Endothelial cell of umbilical vein (primary cell): ENCODE measurements at regions of chr20 and their contacts with region 1.

Region 1: GRCh38 chr20:41260734-41261220 is 56.8 kb downstream of the ZHX3 start:
- DNase-seq: peak; percentile 34
- H3K4me3 ChIP-seq: no peak overlapping the region
- H3K27ac ChIP-seq: no peak overlapping the region
- H3K4me1 ChIP-seq: no peaks in the 10 kb centered on the region
- H3K27me3 ChIP-seq: no peaks in the 10 kb centered on the region
- CTCF ChIP-seq: no peak
- POLR2A ChIP-seq: no peak

Region 2: DNA sequence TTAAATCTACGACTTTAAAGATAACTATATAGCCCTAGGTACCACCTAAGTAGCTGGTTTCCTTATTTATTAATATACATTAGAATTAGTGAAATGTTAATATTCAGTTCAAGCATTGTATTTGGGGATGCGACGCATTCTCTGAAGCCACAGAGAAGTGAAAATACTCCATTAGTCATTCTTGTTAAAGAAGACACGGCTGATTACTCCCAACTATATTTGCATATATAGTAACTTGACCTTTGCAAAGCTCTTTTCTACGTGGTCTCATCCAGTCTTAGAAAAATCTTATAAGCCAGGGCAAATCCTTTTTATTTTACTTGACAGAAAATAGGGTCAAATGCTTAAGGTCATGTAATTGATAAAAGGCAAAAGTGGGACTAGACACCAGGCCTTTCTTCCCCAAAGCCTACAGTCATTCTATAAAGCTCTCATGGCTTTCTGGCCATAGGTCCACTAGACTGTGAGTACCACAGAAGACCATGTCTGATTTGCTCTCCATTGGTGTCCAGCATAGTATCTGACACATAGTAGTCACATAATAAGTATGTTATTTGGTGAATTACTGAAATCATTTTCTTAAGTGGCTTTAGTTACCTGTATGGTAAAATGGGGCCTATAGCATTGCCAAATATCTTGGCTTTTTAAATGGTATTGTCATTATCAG is 45.4 kb after region 1 on chr20:
- CTCF ChIA-PET with region 1: no interaction called
- POLR2A ChIA-PET with region 1: interaction called, 11 read pairs
- dilution Hi-C with region 1: no loop called
- intact Hi-C with region 1: no loop called
- DNase-seq: no peak
- H3K4me3 ChIP-seq: no peak overlapping the region
- H3K27ac ChIP-seq: no peak overlapping the region
- H3K4me1 ChIP-seq: peaks cover 10% of the 10 kb centered on the region
- H3K27me3 ChIP-seq: no peaks in the 10 kb centered on the region
- CTCF ChIP-seq: no peak
- POLR2A ChIP-seq: no peak

Region 3: GRCh38 chr20:41365777-41366598 is 105.2 kb after region 1 on chr20:
- CTCF ChIA-PET with region 1: no interaction called
- POLR2A ChIA-PET with region 1: no interaction called
- dilution Hi-C with region 1: no loop called
- intact Hi-C with region 1: no loop called
- DNase-seq: no peak
- H3K4me3 ChIP-seq: peak overlapping the region in 1 of 3 experiments; percentile 19
- H3K27ac ChIP-seq: no peak overlapping the region
- H3K4me1 ChIP-seq: no peaks in the 10 kb centered on the region
- H3K27me3 ChIP-seq: peaks cover 27 to 34% of the 10 kb centered on the region in 2 experiments
- CTCF ChIP-seq: no peak
- POLR2A ChIP-seq: no peak